HepG2 (cell line): ENCODE measurements at regions of chr16 and their contacts with region 1.

Region 1: GRCh38 chr16:30628627-30629540 is 18.7 kb upstream of the ZNF689 start:
- DNase-seq: peak; percentile 81
- ATAC-seq: peak; percentile 83
- H3K4me3 ChIP-seq: peak overlapping the region in 2 of 3 experiments; percentile 18 to 40; a peak in 3 of 6 replicates
- H3K27ac ChIP-seq: no peak overlapping the region
- H3K4me1 ChIP-seq: peaks cover 46% of the 10 kb centered on the region
- H3K27me3 ChIP-seq: no peaks in the 10 kb centered on the region
- CTCF ChIP-seq: peak; percentile 94
- EP300 ChIP-seq: no peak
- POLR2A ChIP-seq: no peak
- RAD21 ChIP-seq: peak; percentile 80

Region 2: GRCh38 chr16:30091474-30092372 is 537.2 kb before region 1 on chr16 and contains the start of gene TBX6:
- CTCF ChIA-PET with region 1: no interaction called
- POLR2A ChIA-PET with region 1: no interaction called
- in situ Hi-C with region 1: loop called (anchors 25 kb)
- intact Hi-C with region 1: no loop called
- DNase-seq: peak; percentile 88
- ATAC-seq: peak; percentile 81
- H3K4me3 ChIP-seq: peak within 1 kb of the TSS; percentile 58 to 78 (median 67)
- H3K27ac ChIP-seq: peak within 1 kb of the TSS; percentile 72
- H3K4me1 ChIP-seq: peaks cover 74% of the 10 kb centered on the region
- H3K27me3 ChIP-seq: no peaks in the 10 kb centered on the region; a peak in 1 of 5 replicates
- CTCF ChIP-seq: peak; percentile 95
- EP300 ChIP-seq: no peak
- POLR2A ChIP-seq: peak; percentile 69 to 76
- RAD21 ChIP-seq: peak; percentile 95
- total RNA-seq, gene TBX6: 0.24 TPM in 1 of 2 replicates, not detected in the other

Region 3: GRCh38 chr16:30609926-30610839 is 18.7 kb before region 1 on chr16 and contains the start of gene ZNF689:
- CTCF ChIA-PET with region 1: interaction called, 6 read pairs
- POLR2A ChIA-PET with region 1: interaction called, 46 read pairs
- in situ Hi-C with region 1: no loop called
- intact Hi-C with region 1: loop called (anchors 2 kb)
- DNase-seq: peak; percentile 98
- ATAC-seq: peak; percentile 92
- H3K4me3 ChIP-seq: peak within 1 kb of the TSS; percentile 80 to 96 (median 92)
- H3K27ac ChIP-seq: peak within 1 kb of the TSS; percentile 92
- H3K4me1 ChIP-seq: peaks cover 37% of the 10 kb centered on the region
- H3K27me3 ChIP-seq: no peaks in the 10 kb centered on the region; a peak in 1 of 5 replicates
- CTCF ChIP-seq: peak; percentile 21; the same call in 1 of the 2 replicates
- EP300 ChIP-seq: peak; percentile 26 to 33; a peak in 1 of 4 replicates
- POLR2A ChIP-seq: peak; percentile 84 to 96
- RAD21 ChIP-seq: no peak; the same call in 1 of the 2 replicates
- total RNA-seq, gene ZNF689: 19.5 and 22.7 TPM in 2 replicates

Region 4: DNA sequence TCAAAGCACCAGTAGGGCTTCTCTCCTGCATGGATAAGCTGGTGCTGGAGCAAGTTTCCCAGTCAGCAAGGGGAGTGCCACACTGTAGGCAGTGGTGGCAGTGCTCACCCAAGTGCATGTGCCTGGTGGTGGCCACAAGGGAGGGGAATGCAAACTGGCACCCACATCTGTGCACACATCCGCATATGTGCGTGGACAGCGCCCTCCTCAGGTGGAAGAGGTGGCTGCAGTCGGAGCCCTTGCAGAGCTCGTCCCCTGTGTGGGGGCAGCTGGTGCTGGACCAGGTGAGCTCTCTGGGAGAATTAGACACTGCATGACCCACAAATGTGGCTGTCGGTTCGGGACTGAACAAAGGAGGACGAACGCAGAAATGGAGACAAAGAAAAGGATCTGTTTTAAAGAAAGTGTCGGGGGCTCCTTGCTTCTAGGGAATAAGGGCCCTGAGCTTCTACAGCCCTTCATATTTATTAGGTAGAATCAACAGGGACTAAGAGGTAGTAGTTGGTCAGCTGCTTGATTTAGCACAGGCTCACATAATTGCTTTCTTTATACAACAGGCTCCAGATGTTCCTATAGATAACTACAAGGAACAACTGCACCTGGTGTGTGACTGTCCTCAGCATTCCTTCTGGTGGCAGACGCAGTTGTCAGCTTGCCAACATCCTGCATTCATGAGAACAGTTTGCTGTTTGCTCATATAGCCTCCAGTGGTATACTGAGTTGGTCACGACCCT is 13.4 kb before region 1 on chr16:
- CTCF ChIA-PET with region 1: interaction called, 6 read pairs
- POLR2A ChIA-PET with region 1: interaction called, 46 read pairs
- in situ Hi-C with region 1: no loop called
- intact Hi-C with region 1: loop called (anchors 2 kb)
- DNase-seq: peak; percentile 76
- ATAC-seq: peak; percentile 94
- H3K4me3 ChIP-seq: no peak overlapping the region
- H3K27ac ChIP-seq: no peak overlapping the region
- H3K4me1 ChIP-seq: peaks cover 58% of the 10 kb centered on the region
- H3K27me3 ChIP-seq: peaks cover 0 to 2% of the 10 kb centered on the region in 2 experiments; a peak in 1 of 5 replicates
- CTCF ChIP-seq: peak; percentile 100
- EP300 ChIP-seq: no peak
- POLR2A ChIP-seq: no peak
- RAD21 ChIP-seq: peak; percentile 97

Region 5: DNA sequence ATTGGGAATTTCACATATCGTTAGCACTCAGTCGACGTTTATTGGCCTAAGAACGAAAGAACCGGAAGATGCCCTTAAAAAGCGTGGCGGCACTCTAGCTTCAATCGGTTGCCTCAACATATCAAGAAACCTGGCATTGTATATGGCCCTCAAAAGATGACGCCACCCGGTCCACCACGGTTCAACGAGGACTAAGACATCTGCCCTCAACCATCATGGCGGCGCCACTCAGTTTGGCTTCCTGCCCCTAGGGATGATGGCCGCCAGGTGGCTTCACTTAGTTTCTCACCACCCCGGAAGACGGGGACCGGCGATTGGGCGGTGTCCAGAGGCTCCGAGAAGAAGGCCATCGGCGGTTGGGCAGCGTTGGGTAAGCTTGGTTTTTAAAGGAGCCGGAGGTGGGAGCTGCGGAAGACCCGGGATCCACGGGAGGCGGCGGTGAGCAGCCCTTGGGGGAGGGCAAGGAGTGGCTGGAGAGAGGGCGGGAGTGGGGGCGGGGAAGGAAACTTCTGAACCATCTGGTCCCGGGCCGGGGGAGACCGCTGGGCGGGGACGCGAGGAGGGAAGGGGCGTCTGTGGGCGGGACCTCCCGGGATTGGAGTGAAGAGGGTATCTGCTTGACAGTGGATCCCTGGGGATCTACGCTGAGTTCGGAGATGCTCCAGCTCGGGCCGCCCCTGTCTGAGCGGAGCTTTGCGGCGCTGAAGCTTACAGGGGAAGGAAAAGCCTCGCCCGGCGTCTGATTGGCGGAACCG is 21.7 kb after region 1 on chr16 and contains the start of gene PRR14:
- CTCF ChIA-PET with region 1: interaction called, 3 read pairs
- POLR2A ChIA-PET with region 1: interaction called, 8 read pairs
- in situ Hi-C with region 1: no loop called
- intact Hi-C with region 1: loop called (anchors 2 kb)
- DNase-seq: peak; percentile 99
- ATAC-seq: peak; percentile 87
- H3K4me3 ChIP-seq: peak within 1 kb of the TSS; percentile 79 to 100 (median 95)
- H3K27ac ChIP-seq: peak within 1 kb of the TSS; percentile 88
- H3K4me1 ChIP-seq: peaks cover 18% of the 10 kb centered on the region
- H3K27me3 ChIP-seq: no peaks in the 10 kb centered on the region; a peak in 1 of 5 replicates
- CTCF ChIP-seq: peak; percentile 49; the same call in 1 of the 2 replicates
- EP300 ChIP-seq: no peak
- POLR2A ChIP-seq: peak in 1 of 2 experiments; percentile 59; a peak in 2 of 4 replicates
- RAD21 ChIP-seq: peak; percentile 46; the same call in 1 of the 2 replicates
- total RNA-seq, gene PRR14: 9.1 and 11.0 TPM in 2 replicates

Region 6: GRCh38 chr16:30657866-30658730 is 29.2 kb after region 1 on chr16 and contains the start of gene FBRS:
- CTCF ChIA-PET with region 1: interaction called, 4 read pairs
- POLR2A ChIA-PET with region 1: interaction called, 8 read pairs
- in situ Hi-C with region 1: no loop called
- intact Hi-C with region 1: loop called (anchors 1 kb)
- DNase-seq: peak; percentile 100
- ATAC-seq: peak; percentile 85
- H3K4me3 ChIP-seq: peak within 1 kb of the TSS; percentile 78 to 89 (median 82)
- H3K27ac ChIP-seq: peak within 1 kb of the TSS; percentile 93
- H3K4me1 ChIP-seq: peaks cover 36% of the 10 kb centered on the region
- H3K27me3 ChIP-seq: no peaks in the 10 kb centered on the region; a peak in 1 of 5 replicates
- CTCF ChIP-seq: peak; percentile 97
- EP300 ChIP-seq: peak in 1 of 2 experiments; percentile 22; a peak in 2 of 4 replicates
- POLR2A ChIP-seq: peak; percentile 76 to 86
- RAD21 ChIP-seq: peak; percentile 97
- total RNA-seq, gene FBRS: 10.1 and 16.2 TPM in 2 replicates